ENCODE measurements at regions of chr22 and their contacts with region 1.

Region 1: DNA sequence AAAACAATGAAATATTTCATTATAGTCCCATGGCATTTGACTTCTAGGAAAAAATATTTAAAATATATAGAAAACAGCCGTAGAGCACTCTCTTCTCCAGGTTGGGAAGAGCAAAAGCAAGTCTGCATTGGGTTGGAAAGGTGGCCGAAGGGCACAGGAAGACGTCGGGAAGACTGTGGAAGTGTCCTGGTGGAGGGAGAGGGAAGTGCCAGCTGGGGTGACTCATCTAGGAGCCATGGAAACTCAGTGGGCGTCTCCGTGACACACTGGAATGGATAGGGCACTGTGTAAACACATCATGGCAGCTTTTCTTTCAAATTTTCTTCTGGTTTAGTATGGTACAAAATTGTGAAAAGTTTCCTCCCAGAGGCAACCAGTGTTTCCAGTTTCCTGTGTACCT is 12.7 kb downstream of the GTPBP1 start:
- DNase-seq: no peak
- H3K4me3 ChIP-seq: no peak overlapping the region
- CTCF ChIP-seq: peak; percentile 63

Region 2: DNA sequence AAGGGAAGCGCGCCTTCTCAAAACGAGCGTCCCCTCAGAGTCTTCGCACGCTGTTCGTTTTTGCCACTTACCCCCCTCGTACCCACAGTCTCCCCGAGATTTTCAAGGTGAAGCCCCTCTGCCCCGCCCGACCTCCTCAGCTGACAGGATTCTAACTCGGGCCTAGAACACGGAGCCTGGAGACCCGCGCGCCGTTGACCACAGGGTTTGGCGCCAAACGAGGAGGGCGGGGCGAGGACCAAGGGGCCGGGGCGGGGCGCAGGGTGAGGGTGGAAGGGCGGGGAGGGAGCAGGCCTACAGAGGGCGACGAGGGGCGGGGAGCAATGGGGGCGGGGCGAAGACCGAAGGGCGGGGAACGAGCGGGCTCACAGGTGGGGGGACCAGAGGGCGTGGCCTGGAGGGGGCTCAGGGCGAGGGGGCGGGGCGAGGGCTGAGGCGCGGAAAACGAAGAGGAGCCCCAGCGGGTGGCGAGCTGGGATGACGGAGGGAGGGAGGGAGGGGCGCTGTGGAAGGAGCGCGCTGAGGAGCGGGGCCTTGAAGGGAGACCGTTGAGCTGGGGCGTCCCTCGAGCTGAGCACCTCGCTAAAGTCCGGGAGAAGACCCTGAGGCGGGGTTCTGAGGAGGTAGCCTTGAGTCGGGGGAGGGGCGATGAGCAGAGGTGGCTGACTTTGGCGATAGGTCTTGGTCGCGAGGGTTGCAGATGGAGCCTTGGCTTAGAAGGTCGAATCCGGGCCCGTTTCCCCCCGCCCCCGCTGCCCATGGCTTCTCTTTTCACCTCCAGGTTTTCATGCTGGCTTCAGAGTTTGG is 148.2 kb before region 1 on chr22 and contains the start of gene DMC1:
- CTCF ChIA-PET with region 1: no interaction called
- POLR2A ChIA-PET with region 1: no interaction called
- DNase-seq: no peak
- H3K4me3 ChIP-seq: peak within 1 kb of the TSS; percentile 75
- CTCF ChIP-seq: no peak

Region 3: DNA sequence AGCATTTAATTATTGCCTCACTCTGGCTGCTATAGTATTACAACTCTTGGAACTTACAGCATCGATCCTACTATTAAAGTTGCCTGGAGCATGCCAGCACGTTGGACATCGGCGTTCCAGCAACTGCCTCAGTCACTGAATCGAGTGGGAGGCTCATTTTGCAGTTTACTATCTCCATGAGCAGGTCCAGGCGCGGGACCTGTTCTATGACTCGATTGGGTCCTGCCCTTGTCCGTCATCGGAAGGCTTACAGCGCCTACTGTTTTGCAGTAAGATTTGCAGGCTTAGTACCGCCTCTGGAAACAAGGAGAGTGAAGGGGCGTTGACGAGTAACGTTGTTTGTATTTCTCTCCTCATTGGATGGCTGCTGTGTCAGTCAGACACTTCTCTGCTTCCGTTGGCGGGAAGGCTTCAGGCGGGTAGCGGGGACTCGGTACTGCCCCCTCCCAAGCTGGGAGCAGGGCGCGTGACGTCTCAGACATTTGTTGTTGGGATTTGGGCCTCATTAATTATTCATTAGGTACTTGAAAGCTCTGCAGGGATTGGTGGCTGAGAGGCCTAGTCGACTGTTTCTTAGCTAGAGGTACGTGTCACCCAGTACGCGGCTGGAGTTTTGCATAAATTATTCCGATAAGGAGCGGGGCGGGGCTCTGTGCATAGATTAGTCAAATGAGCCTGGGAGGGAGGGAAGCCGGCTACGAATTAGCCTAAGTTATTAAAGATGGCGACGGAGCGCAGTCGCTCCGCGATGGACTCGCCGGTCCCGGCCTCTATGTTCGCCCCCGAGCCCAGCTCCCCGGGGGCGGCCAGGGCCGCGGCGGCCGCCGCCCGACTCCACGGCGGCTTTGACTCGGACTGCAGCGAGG is 12.9 kb before region 1 on chr22 and contains the start of gene GTPBP1:
- CTCF ChIA-PET with region 1: interaction called, 13 read pairs
- POLR2A ChIA-PET with region 1: interaction called, 4 read pairs
- DNase-seq: peak; percentile 100
- H3K4me3 ChIP-seq: peak within 1 kb of the TSS; percentile 88
- CTCF ChIP-seq: no peak

Region 4: GRCh38 chr22:38733329-38733723 is 14.9 kb after region 1 on chr22:
- CTCF ChIA-PET with region 1: interaction called, 52 read pairs
- POLR2A ChIA-PET with region 1: interaction called, 3 read pairs
- DNase-seq: no peak
- H3K4me3 ChIP-seq: no peak overlapping the region
- CTCF ChIP-seq: peak; percentile 71